ENCODE measurements at regions of chr12 and their contacts with region 1.

Region 1: DNA sequence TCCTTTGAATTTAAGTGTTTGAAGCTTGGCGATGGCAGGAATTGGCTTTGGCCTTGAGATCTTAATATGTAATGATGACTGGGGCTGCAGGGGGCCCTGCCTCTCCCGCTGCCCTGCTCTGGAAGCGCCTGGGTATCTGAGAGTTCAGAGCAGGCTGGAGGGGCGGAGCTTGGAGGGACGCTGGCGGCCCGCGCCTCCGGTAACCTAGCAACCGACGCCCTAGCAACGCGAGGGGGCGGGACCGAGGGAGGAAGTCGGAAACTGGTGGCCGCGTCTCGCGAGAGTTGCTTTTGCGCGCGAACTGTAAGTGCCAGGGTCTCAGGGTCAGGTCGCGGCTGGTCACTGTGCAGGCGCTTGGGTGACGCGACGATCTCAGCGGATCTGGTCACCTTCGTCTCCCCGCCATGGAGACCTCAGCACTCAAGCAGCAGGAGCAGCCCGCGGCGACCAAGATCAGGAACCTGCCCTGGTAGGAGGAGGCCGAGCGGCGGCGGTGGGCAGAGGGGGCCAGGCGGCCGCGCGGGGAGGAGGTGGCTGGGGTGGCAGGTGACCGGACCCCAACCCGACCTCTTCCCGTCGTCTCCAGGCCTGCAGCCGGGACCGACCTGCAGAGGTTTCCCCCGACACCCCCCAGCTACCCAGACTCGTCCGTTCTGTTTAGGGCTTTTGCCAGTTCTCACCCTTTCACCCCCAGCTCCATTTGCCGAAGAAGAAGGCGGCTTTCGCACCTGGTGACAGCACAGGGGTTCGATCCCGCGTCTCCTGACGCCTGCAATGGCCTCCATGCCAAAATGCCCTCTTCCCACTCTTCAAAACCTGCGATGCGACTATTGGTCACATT is at the start of gene RFC5:
- DNase-seq: peak; percentile 99 to 100
- ATAC-seq: peak; percentile 99
- H3K4me3 ChIP-seq: peak within 1 kb of the TSS; percentile 13 to 52
- H3K27ac ChIP-seq: no peak within 1 kb of the TSS
- H3K4me1 ChIP-seq: no peaks in the 10 kb centered on the region
- H3K27me3 ChIP-seq: no peaks in the 10 kb centered on the region
- total RNA-seq, gene RFC5: 5.7 to 8.1 TPM

Region 2: DNA sequence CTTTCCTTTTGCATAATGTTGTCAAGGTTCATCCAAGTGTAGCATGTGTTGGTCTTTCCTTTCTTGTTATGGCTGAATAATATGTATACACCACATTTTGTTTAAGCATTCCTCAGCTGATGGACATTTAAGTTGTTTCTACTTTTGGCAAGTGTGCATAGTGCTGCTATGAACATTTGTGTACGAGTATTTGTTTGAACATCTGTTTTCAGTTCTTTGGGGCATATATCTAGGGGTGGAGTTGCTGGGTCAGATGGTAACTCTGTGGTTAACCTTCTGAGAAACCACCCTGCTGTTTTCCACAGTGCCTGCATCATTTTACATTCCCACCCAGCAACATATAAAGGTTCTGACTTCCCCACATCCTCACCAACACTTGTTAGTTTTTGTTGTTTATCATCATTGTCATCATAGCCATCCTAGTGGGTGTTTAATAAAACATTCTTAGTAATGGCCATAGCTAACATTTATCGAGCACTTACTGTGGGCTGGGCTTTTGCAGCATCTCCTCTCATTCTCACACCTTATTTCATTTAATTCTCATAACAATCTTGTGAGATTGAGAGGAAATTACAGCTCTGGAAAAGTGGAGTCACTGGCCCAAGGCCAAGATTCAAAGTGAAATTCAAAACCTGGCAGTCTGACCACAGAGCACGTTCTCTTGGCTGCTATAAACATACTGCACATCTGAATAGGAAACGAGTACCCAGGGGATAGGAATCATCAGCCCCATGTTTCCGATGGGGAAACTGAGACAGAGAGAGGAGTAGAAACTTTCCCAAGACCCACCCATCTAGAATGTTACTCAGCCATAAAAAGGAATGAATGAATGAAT is 241.5 kb before region 1 on chr12:
- intact Hi-C with region 1: no loop called
- DNase-seq: no peak
- ATAC-seq: no peak
- H3K4me3 ChIP-seq: no peak overlapping the region
- H3K27ac ChIP-seq: no peak overlapping the region
- H3K4me1 ChIP-seq: no peaks in the 10 kb centered on the region
- H3K27me3 ChIP-seq: no peaks in the 10 kb centered on the region

Region 3: DNA sequence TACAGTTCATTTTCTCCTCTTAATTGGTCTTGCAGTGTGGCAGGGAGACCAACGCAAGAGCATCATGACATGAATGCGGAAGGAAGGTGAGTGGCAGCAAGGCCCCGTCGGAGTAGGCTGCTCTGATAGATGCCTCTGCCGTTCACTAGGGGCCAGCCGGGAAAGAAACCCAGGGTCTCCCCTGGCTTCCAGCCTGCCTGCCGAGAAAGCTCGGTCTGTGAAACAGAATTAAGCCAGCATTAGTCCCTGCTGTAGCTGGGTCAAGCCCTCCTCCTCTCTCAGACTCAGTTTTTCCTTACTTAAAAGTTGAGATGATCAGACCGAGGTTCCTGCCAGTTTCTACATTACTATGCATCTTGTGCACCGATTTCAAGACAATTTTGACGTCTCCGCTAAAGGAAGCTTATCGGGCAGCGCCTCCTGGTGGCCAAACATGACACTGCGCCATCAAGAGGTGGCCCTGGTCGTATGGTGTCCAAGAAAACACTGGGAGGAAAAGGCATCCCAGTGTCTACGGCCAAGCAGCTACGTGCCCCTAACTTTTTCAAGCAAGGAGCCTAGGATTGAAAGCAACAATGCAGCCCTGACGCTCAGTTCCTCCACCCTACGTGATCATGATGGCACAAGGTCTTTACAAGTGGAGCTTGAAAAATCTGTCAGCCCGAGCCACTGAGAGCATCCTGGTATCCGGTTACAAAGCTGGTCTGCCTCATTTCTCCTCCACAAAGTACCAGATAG is 179.5 kb before region 1 on chr12:
- intact Hi-C with region 1: no loop called
- DNase-seq: peak; percentile 69 to 92
- ATAC-seq: peak; percentile 81
- H3K4me3 ChIP-seq: no peak overlapping the region
- H3K27ac ChIP-seq: no peak overlapping the region
- H3K4me1 ChIP-seq: no peaks in the 10 kb centered on the region
- H3K27me3 ChIP-seq: no peaks in the 10 kb centered on the region

Region 4: GRCh38 chr12:117874842-117875434 is 141.7 kb before region 1 on chr12:
- intact Hi-C with region 1: loop called in 1 of 2 experiments (anchors 10 kb)
- DNase-seq: peak; percentile 77 to 90
- ATAC-seq: peak; percentile 82
- H3K4me3 ChIP-seq: no peak overlapping the region
- H3K27ac ChIP-seq: no peak overlapping the region
- H3K4me1 ChIP-seq: no peaks in the 10 kb centered on the region
- H3K27me3 ChIP-seq: no peaks in the 10 kb centered on the region

Region 5: DNA sequence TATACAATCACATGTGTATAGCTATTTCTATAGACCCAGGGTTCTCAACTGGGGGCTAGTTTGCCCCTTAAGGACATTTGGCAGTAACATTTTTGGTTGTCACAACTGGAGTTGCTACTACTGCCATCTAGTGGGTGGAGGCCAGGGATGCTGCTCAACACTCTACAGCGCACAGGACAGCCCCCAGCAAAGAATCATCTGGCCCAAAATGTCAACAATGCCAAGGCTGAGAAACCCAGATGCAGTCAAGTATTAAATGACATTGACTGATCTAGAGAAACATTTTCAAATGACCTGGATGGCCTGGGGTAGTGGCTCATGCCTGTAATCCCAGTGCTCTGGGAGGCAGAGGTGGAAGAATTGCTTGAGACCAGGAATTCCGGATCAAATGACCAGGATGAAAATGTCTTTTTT is 38.5 kb after region 1 on chr12:
- intact Hi-C with region 1: loop called (anchors 5 kb)
- DNase-seq: peak; percentile 59 to 73
- ATAC-seq: no peak
- H3K4me3 ChIP-seq: no peak overlapping the region
- H3K27ac ChIP-seq: peak overlapping the region in 1 of 2 donors; percentile 66
- H3K4me1 ChIP-seq: peaks cover 0 to 2% of the 10 kb centered on the region in 2 donors
- H3K27me3 ChIP-seq: no peaks in the 10 kb centered on the region

Region 6: GRCh38 chr12:118103604-118104382 is 87.1 kb after region 1 on chr12 and contains the start of gene VSIG10:
- intact Hi-C with region 1: loop called in 1 of 2 experiments (anchors 2 kb)
- DNase-seq: peak; percentile 79 to 88
- ATAC-seq: peak; percentile 94
- H3K4me3 ChIP-seq: peak within 1 kb of the TSS; percentile 70 to 80
- H3K27ac ChIP-seq: peak within 1 kb of the TSS in 1 of 2 donors; percentile 52
- H3K4me1 ChIP-seq: no peaks in the 10 kb centered on the region
- H3K27me3 ChIP-seq: no peaks in the 10 kb centered on the region
- total RNA-seq, gene VSIG10: 10.5 to 20.6 TPM

Region 7: DNA sequence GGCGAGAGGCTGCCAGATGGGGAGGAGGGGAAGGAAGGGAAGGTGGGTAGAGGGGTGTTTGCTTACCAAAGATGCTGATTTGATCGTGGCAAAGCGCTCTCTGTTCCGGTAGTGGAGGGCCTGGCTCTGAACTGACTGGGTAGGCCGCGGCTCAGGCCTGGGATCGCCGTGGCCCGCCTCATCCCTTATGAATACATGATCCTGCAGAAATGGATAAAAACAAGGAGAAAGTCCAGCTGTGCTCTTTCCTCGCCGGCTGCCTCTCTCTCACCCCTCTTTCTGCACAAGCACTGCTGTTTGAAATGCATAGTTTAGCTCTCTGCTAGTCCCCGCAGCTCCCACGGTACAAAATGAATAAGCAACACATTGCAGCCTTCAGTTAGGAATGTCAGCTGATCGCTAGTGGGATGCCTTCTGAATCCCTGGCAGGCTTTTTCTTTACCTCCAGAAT is 173.1 kb after region 1 on chr12:
- intact Hi-C with region 1: no loop called
- DNase-seq: peak in 1 of 2 donors; percentile 73
- ATAC-seq: peak; percentile 84
- H3K4me3 ChIP-seq: peak overlapping the region; percentile 39 to 98
- H3K27ac ChIP-seq: peak overlapping the region; percentile 1 to 71
- H3K4me1 ChIP-seq: peaks cover 0 to 3% of the 10 kb centered on the region in 2 donors
- H3K27me3 ChIP-seq: no peaks in the 10 kb centered on the region

Region 8: DNA sequence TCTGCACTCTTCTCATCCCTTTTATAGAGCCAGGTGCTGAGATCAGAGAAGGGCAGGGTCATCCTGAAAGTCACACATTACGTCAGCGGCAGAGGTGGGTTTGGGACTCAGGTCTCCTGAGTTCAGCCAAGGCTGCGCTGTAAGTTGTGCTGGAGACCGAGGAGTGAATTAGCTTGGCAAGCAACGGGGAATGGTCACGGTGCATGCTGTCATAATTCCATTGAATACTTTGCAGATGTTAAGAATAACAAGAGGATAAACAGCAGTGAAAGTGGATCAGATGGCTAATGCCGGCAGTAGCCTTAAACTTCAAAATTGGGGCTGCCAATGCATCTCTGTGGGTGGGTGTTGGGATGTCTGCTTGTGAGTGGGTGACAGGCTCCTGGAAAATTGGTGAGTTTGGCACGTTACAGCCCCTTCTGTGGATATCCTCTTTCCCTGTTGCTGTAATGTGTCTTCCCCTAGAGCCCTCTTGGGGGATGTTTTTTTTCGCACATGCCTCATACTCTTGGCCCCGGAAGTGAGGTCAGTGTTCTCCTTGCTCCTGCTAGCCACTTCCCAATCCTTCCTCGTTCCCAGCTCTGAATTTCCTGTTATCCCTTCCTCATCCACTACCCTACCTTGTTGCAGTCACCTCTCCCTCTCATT is 677.6 kb after region 1 on chr12:
- intact Hi-C with region 1: no loop called
- DNase-seq: no peak
- ATAC-seq: no peak
- H3K4me3 ChIP-seq: no peak overlapping the region
- H3K27ac ChIP-seq: no peak overlapping the region
- H3K4me1 ChIP-seq: no peaks in the 10 kb centered on the region
- H3K27me3 ChIP-seq: peaks cover 0 to 3% of the 10 kb centered on the region in 2 donors